Posterior vena cava (tissue), 2 donors: ENCODE measurements at regions of chr22 and their contacts with region 1.

Region 1: GRCh38 chr22:45638834-45639746 is 32.5 kb upstream of the ATXN10 start:
- DNase-seq: peak; percentile 92

Region 2: GRCh38 chr22:45584121-45584570 is 54.9 kb before region 1 on chr22:
- intact Hi-C with region 1: loop called in 1 of 2 experiments (anchors 10 kb)
- DNase-seq: no peak

Region 3: GRCh38 chr22:47328550-47329243 is 1689.6 kb after region 1 on chr22:
- intact Hi-C with region 1: loop called in 1 of 2 experiments (anchors 10 kb)
- DNase-seq: no peak